Activated T-helper 2 cell treated with anti-CD3 and anti-CD28 coated beads, Interferon-gamma antibody, Interleukin-2, Interleukin-4, amounts not matched to agents 10 μg/mL and 5 μg/mL and 100 μg/mL, durations not matched to agents 14 hours and 24 hours and 36 hours (primary cell): ENCODE measurements at regions of chr15 and their contacts with region 1.

Region 1: DNA sequence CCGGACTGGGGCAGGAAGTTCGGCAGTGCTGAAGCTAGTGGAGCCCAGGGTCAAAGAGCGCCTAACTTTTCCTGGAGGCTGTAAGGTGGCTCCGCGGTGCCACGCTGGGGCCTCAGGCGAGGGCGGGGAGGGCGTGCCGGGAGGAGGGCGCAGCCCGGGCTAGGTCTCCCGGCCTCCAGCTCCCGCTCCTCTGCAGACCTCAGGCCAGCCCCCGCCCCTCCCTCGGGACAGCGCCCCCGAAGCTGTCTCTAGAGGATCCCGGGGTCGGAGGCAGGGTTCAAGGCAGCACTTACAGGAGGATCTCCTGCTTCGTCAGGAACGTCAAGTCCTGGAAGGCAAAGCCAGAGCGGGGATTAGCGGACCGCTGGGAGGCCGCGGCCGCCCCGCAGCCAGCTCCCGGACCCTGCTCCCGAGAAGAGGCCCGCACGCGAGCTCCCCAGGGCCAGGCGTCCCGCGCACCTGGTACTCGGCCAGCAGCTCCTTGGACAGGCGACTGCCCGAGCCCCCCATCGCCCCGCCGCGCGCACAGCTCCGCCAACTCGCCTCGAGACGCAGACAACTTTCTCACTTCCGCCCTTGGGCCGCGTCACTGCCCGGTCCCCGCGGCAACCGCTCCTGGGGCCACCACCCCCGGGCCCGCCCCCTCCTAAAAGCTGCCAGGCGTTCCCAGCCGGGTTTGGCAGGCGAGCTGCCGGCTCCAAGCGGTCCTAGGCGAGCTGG is at the start of gene CIB1:
- DNase-seq: peak; percentile 97
- H3K4me3 Mint-ChIP-seq: peak within 1 kb of the TSS; percentile 92
- H3K27ac Mint-ChIP-seq: peak within 1 kb of the TSS; percentile 86
- H3K4me1 Mint-ChIP-seq: peaks cover 35% of the 10 kb centered on the region
- H3K27me3 Mint-ChIP-seq: no peaks in the 10 kb centered on the region
- total RNA-seq, gene CIB1: 159 and 162 TPM in 2 replicates

Region 2: DNA sequence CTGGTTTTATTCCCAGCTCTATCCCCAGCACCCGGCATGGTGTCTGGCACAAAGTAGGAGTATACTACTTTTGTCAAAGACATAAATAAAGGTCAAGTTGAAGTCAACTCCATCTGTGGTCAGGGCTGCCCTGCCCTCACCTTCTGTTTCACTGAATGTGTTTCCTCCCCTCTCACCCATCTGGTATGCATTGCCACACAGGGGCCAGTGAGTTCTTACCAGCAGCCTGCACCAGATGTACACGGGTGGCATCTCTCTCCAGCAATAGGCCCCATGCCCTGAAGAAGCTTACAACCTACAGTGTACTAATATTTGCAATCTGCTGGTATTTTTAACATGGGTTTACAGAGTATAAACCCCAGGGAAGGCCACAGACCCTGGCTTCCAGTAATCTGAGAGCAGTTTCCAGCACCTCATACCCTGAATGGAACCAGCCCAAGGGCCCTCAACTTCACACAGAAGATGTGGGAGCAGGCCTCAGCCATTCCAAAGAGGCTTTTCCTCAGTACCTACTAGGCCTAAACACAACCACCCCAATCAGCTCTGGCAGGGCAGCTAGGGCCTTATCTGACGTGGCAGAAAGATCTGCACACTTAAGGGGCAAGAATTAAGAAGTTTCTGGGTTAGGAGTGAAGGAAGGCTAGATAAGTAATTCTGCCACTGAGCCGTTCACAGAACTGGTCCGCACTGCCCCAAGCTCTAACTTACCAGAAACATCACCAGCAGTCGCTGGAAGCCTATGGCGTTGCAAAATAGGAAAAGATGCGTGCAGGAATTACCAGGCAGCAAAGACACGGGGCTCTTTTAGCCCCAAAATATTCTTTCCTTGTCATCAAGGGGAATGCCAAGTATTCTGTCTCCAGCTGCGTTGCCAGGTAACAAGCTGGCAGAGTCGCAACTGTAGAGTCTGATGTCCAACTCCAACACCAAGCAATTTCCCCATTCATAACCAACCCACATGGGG is 133.4 kb before region 1 on chr15:
- intact Hi-C with region 1: loop called (anchors 5 kb)
- DNase-seq: no peak
- H3K4me3 Mint-ChIP-seq: peak overlapping the region; percentile 90
- H3K27ac Mint-ChIP-seq: peak overlapping the region; percentile 91
- H3K4me1 Mint-ChIP-seq: peaks cover 67% of the 10 kb centered on the region
- H3K27me3 Mint-ChIP-seq: peaks cover 7% of the 10 kb centered on the region

Region 3: GRCh38 chr15:90165659-90166421 is 67.7 kb before region 1 on chr15:
- intact Hi-C with region 1: loop called (anchors 5 kb)
- DNase-seq: peak; percentile 16
- H3K4me3 Mint-ChIP-seq: no peak overlapping the region
- H3K27ac Mint-ChIP-seq: peak overlapping the region; percentile 77
- H3K4me1 Mint-ChIP-seq: peaks cover 29% of the 10 kb centered on the region
- H3K27me3 Mint-ChIP-seq: no peaks in the 10 kb centered on the region

Region 4: GRCh38 chr15:90201130-90201949 is 32.2 kb before region 1 on chr15 and contains the start of gene SEMA4B:
- intact Hi-C with region 1: loop called (anchors 2 kb)
- DNase-seq: peak; percentile 72
- H3K4me3 Mint-ChIP-seq: peak within 1 kb of the TSS; percentile 83
- H3K27ac Mint-ChIP-seq: peak within 1 kb of the TSS; percentile 67
- H3K4me1 Mint-ChIP-seq: peaks cover 27% of the 10 kb centered on the region
- H3K27me3 Mint-ChIP-seq: no peaks in the 10 kb centered on the region
- total RNA-seq, gene SEMA4B: 28.3 and 30.2 TPM in 2 replicates

Region 5: DNA sequence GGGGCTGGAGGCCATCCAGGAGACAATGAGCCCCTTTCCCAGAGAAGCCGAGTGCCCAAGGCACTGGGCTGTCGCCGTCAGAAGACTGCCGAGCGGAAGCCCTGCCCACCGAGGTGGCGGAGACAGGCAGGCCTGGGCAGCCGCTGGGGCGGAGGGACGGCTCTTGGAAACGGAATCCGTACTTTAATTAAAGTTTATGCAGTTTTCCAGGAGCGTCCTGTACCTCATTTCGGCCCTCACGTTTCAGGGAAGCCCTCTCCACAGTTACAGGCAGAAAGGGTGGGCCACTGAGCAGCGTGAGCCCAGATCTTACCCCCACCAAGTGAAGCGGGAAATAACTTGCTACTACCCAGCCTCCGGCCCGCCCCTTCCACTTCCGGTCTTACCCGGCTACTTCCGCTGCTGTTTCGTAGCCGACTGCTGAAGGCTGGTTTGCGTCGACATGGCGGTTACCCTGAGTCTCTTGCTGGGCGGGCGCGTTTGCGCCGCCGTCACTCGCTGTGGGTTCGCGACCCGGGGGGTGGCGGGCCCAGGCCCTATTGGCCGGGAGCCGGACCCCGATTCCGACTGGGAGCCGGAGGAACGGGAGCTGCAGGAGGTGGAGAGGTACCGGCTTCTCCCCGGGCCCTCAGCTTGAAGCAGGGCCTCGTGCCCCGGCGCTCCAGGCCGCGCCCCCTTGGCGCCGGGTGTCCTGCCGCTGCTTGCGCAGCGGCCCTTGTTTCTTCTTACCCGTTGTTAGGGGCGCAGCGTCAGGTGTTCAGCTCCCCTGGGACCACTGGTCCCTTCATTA is 31.9 kb after region 1 on chr15 and contains the start of gene NGRN:
- intact Hi-C with region 1: loop called (anchors 1 kb)
- DNase-seq: peak; percentile 91
- H3K4me3 Mint-ChIP-seq: peak within 1 kb of the TSS; percentile 97
- H3K27ac Mint-ChIP-seq: peak within 1 kb of the TSS; percentile 96
- H3K4me1 Mint-ChIP-seq: peaks cover 36% of the 10 kb centered on the region
- H3K27me3 Mint-ChIP-seq: no peaks in the 10 kb centered on the region
- total RNA-seq, gene NGRN: 37.1 and 40.3 TPM in 2 replicates

Region 6: GRCh38 chr15:90291679-90292356 is 58.3 kb after region 1 on chr15:
- intact Hi-C with region 1: loop called (anchors 5 kb)
- DNase-seq: no peak
- H3K4me3 Mint-ChIP-seq: no peak overlapping the region
- H3K27ac Mint-ChIP-seq: no peak overlapping the region
- H3K4me1 Mint-ChIP-seq: peaks cover 17% of the 10 kb centered on the region
- H3K27me3 Mint-ChIP-seq: peaks cover 13% of the 10 kb centered on the region

Region 7: DNA sequence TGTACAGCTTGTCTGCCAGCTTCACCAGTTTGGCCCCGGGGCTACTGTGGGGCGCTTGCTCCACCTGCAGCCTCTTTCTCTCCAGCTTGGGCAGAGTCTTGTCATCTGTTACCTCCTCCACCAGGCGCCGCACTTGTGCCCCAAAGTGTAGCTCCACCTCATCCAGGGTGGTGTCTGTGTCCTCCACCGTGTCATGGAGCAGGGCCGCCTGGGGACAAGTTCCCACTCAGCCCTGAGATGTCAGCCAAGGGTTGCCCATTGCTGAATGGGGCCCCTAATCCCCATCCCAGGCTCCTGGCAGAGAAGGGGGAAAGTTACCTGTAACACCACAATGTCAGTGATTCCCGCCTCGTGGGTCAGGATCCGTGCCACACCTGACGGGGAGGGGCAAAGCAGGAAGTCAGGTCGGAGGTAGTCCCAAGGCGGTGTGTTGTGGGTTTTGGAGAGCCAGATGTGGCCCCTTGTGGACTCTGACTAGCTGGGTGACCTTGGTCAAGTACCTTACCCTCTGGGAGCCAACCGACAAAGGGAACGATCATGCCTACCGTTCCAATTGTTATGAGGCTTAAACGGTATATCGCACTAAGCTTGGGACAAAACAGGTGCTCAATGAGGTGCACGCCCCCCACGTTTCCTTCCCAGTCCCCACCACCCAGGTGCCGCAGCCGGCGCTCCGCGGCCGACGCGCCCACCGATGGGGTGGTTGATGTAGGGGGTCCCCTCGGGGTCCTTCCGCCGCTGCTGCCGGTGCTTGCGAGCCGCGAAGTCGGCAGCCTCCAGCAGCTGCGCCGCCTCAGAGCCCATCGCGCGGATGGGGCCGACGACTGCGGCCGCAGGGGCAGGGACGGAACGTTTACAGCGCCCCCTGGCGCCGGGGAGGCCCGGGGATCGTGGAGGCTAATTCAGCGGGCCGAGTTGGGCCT is 698.5 kb after region 1 on chr15 and contains the start of gene HDDC3:
- intact Hi-C with region 1: loop called (anchors 10 kb)
- DNase-seq: peak; percentile 85
- H3K4me3 Mint-ChIP-seq: peak within 1 kb of the TSS; percentile 92
- H3K27ac Mint-ChIP-seq: peak within 1 kb of the TSS; percentile 98
- H3K4me1 Mint-ChIP-seq: peaks cover 50% of the 10 kb centered on the region
- H3K27me3 Mint-ChIP-seq: no peaks in the 10 kb centered on the region
- total RNA-seq, gene HDDC3: 38.6 and 43.0 TPM in 2 replicates